GM12878 (cell line): ENCODE measurements at regions of chr13 and their contacts with region 1.

Region 1: DNA sequence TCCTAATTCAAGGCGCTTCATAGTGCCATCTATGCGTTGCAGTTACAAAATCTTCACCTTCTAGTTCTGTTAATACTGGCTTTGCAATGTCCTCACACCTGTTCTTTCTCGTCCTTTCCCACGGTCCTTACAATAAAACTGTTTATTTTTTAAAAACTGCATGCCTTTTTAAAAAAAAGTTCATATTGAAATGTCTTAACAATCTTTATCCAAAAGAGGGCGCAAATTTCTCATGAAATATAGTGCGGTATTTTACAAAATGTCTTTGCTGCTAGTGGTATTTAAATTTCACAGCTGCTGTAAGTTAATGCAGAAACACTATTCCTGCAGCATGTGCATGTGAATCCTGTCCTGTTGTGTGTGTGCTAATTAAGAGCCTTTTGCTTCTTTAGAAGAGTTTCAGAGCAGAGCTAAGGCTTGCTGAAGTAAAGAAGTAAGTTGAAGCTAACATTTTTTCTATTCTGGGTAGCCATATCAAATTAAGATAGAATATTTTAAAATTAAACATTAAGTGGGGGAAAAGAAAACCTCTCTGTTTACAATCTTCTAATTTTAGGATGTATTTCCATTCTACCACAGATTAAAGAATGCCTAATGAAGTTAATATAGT is 15.8 kb upstream of the CLDN10 start:
- DNase-seq: no peak
- ATAC-seq: peak; percentile 34; the same call in 2 of the 3 replicates
- H3K4me3 ChIP-seq: no peak overlapping the region
- H3K27ac ChIP-seq: no peak overlapping the region
- H3K4me1 ChIP-seq: no peaks in the 10 kb centered on the region
- H3K27me3 ChIP-seq: no peaks in the 10 kb centered on the region
- CTCF ChIP-seq: peak; percentile 34 to 50 (median 47); a peak in 5 of 6 replicates
- EP300 ChIP-seq: no peak
- POLR2A ChIP-seq: no peak
- RAD21 ChIP-seq: peak; percentile 51

Region 2: DNA sequence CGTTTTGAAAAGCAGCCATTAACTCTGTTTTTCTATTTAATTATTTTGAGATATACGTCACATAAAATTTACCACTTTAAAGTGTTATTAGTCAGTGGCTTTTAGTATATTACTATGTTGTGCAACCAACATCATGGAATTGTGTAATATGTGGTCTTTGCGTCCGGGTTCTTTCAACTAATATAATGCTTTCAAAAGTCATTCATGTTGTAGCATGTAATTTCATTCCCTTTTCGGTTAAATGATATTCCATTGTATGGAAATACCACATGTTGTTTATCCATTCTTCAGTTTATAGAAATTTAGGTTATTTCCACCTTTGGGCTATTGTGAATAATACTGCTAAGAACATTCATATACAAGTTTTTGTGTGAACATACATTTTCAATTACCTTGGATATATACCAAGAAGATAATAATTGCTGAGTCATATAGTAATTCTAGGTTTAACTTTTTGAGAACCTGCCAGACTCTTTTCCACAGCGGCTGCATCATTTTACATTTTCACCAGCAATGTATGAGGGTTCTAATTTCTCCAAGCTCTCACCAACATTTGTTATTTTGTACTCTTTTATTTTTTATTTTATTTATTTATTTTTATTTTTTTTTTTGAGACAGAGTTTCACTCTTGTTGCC is 12.4 kb before region 1 on chr13:
- CTCF ChIA-PET with region 1: interaction called, 10 read pairs
- POLR2A ChIA-PET with region 1: no interaction called
- RAD21 ChIA-PET with region 1: no interaction called
- SMC1A ChIA-PET with region 1: interaction called, 3 read pairs
- in situ Hi-C with region 1: no loop called
- intact Hi-C with region 1: no loop called
- DNase-seq: no peak
- ATAC-seq: no peak
- H3K4me3 ChIP-seq: no peak overlapping the region
- H3K27ac ChIP-seq: no peak overlapping the region
- H3K4me1 ChIP-seq: no peaks in the 10 kb centered on the region
- H3K27me3 ChIP-seq: no peaks in the 10 kb centered on the region; a peak in 1 of 4 replicates
- CTCF ChIP-seq: no peak
- EP300 ChIP-seq: no peak
- POLR2A ChIP-seq: no peak
- RAD21 ChIP-seq: no peak

Region 3: GRCh38 chr13:95660981-95661581 is 124.3 kb after region 1 on chr13:
- CTCF ChIA-PET with region 1: interaction called, 13 read pairs
- POLR2A ChIA-PET with region 1: no interaction called
- RAD21 ChIA-PET with region 1: interaction called, 6 read pairs
- SMC1A ChIA-PET with region 1: interaction called, 8 read pairs
- in situ Hi-C with region 1: no loop called
- intact Hi-C with region 1: loop called (anchors 2 kb)
- DNase-seq: no peak
- ATAC-seq: peak; percentile 53; the same call in 2 of the 3 replicates
- H3K4me3 ChIP-seq: no peak overlapping the region
- H3K27ac ChIP-seq: no peak overlapping the region
- H3K4me1 ChIP-seq: no peaks in the 10 kb centered on the region
- H3K27me3 ChIP-seq: no peaks in the 10 kb centered on the region
- CTCF ChIP-seq: peak; percentile 50 to 60 (median 54)
- EP300 ChIP-seq: no peak
- POLR2A ChIP-seq: no peak
- RAD21 ChIP-seq: peak; percentile 68